ENCODE measurements at regions of chr15 and their contacts with region 1.

Region 1: GRCh38 chr15:34223904-34224596 is 766 bp upstream of the EMC4 start:
- DNase-seq: no peak
- ATAC-seq: peak; percentile 43

Region 2: DNA sequence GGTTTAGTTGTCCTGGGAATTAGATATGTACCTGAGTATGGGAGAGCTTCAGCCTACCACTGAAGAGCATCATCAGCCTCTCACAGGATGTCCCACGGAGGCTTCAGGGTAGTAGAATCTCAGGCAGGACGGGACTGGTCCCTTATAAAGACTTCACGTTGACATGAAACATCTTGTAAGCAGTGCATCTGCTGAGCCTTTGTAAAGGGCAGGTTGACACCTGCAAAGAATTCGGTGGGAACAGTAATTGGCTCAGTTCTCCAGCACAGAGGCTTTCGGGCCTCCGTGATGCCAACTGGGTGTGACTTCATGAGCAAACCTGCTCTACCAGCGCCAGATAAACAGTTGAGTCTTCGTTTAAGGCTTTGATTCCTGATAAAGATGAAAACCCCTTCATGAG is 158.1 kb before region 1 on chr15:
- intact Hi-C with region 1: no loop called
- DNase-seq: no peak
- ATAC-seq: no peak

Region 3: DNA sequence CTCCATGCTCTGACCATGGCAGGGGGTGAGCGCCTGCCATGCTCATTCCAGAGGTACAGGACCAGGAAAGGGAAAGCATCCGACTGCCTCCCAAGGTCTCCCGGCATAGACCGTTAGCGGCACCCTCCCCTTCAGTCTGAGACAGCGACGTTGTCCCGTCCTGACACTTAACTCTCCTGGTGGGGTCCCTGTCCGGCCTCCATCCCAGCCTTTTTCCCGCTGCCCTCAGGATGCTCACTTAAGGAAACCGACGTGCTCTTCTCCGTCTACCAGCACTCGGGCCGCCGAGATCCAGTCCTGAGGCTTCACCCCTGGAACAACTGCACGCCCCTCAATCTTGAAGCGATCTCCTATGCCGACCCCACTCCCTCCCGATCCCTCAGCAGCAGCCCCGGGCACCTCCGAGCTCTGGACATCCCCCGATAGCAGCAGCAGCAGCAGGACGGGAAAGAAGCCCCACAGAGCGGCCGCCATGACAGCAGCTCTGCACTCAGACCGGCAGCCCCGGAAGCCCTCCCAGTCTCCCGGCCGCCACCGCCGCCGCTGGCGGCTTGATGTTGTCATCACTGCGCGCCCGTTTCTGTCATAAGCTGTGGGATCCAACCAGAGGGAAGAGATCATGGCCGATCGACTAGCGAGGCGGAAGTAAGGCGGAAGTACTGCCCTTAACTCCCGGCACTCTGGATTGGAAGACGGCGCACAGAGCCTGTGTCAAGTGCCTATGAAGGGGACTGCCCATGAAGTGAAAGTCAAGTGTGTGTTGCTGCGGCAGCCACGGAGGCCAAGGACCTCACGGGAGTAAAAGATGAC is 122.5 kb before region 1 on chr15 and contains the starts of genes EMC7 and PGBD4:
- intact Hi-C with region 1: loop called (anchors 5 kb)
- DNase-seq: peak; percentile 99
- ATAC-seq: peak; percentile 100
- total RNA-seq, gene EMC7: 59.3 TPM
- total RNA-seq, gene PGBD4: 1.3 TPM